BJ (cell line): ENCODE measurements at regions of chr9 and their contacts with region 1.

Region 1: GRCh38 chr9:128406848-128407391 is 13.7 kb upstream of the CERCAM start:
- DNase-seq: no peak
- H3K4me3 ChIP-seq: no peak overlapping the region
- H3K27me3 ChIP-seq: no peaks in the 10 kb centered on the region; the same call in 1 of the 2 replicates
- CTCF ChIP-seq: no peak

Region 2: DNA sequence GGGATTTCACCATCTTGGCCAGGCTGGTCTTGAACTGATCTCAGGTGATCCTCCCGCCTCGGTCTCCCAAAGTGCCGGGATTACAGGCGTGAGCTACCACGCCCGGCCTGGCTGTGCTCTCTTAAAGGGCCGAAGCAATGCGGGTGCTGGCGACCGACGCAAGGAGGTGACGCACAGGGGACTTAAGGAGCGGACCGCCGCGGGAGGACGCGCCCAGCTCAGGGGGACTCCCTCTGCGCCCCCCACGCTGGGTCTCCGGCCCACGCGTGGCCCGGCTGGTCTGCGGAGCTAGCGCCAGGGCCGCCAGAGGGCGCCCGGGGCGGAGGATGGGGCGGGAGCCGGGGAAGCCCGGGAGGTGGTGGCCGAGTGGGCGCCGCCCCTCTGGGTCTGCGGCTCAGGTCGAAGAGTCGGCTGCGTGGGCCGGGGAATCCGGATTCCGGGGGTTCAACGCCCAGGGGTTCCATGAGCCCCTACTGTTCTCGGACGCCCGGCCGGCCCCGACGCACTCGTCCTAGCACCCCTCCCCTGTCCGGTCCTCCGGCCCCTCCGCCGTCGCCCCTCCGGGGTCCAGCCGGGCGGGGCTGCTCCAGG is 13.2 kb after region 1 on chr9:
- CTCF ChIA-PET with region 1: interaction called, 21 read pairs
- POLR2A ChIA-PET with region 1: no interaction called
- DNase-seq: no peak
- H3K4me3 ChIP-seq: peak overlapping the region; percentile 60
- H3K27me3 ChIP-seq: peaks cover 6% of the 10 kb centered on the region
- CTCF ChIP-seq: peak; percentile 60